ENCODE measurements at regions of chr19 and their contacts with region 1.

Region 1: DNA sequence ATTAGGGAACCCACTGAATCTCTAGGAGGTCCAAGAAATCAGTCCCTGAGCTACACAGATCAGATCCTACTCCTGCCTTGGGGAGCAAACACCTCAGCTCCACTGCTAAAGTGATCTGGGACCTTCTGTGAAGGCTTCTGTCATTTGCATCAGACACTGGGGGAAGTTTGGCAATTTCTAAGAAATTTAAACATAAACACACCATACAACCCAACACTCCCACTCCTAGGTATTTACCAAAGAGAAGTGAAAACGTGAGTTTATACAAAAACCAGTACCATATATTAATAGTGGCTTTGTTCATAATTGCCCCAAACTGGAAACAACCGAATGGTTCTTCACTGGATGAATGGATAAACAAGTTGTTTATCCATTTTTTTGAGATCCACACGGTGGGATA is 7.3 kb upstream of the TYROBP start:
- DNase-seq: no peak
- H3K4me3 ChIP-seq: no peak overlapping the region
- H3K27ac ChIP-seq: no peak overlapping the region
- H3K4me1 ChIP-seq: peaks cover 0 to 19% (median 3%) of the 10 kb centered on the region in 4 donors
- H3K27me3 ChIP-seq: no peaks in the 10 kb centered on the region
- CTCF ChIP-seq: no peak
- EP300 ChIP-seq: no peak
- POLR2A ChIP-seq: no peak

Region 2: DNA sequence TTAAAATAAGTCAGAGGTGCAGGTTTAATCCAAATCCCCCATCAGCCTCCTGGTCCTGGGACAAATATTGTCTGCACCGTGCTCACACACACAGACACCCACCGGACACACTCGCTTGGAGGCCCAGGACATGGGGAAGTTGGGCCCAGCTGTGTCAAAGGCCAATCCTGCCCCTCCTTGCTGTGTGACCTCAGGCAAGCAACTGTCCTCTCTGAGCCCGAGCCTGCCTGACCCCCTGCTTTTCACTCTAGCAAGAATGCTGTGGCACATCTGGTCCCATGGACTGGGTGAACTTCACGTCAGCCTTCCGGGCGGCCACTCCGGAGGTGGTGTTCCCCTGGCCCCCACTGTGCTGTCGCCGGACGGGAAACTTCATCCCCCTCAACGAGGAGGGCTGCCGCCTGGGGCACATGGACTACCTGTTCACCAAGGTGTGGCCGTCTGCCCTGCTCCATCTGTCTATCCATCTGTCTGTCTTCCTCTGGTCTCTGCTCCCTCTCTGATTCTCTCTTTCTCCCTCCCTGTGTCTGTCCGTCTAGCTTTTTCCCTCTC is 239.8 kb before region 1 on chr19:
- intact Hi-C with region 1: loop called (anchors 5 kb)
- DNase-seq: no peak
- H3K4me3 ChIP-seq: no peak overlapping the region
- H3K27ac ChIP-seq: no peak overlapping the region
- H3K4me1 ChIP-seq: peaks cover 0 to 7% (median 6%) of the 10 kb centered on the region in 4 donors
- H3K27me3 ChIP-seq: peaks cover 0 to 58% (median 18%) of the 10 kb centered on the region in 3 donors
- CTCF ChIP-seq: no peak
- EP300 ChIP-seq: no peak
- POLR2A ChIP-seq: no peak

Region 3: DNA sequence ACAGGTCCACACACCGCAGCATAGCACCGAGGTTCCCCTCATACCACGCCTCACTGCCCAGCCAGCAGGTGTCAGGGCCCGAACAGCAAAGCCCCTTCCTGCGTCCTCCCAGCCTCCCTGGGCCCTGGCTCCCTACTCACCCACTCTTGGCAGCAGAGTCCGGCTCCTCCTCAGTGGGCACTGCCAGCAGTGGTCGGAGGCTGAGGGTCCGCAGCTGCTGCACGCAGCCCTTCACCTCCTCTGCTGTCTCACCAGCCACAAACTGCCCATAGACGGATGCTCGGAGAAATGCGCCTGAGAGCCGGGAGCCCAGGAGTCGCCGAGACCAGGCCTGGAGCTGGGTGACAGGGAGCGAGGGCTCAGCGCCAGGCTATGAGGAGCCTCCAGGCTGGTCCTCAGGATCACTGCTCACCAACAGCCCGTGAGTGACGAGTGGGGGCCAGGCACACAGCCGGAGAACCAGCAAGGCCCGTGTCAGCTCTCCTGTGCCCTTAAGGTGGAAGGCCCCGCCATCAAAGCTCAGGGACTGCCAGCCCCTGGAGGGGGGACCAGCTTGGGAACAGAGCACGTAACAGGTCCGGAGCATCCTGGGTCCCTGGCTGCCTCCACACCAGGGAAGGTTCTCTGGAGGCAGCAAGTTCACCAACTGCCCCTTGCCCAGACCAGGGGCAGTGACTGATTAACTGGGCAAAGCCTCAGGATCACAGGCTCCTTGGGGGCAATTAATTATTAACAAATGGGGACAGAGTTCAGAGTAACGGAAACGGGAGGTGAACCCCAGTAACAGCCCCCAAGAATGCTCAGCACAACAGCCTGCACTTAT is 103.0 kb before region 1 on chr19 and contains the start of gene PRODH2:
- intact Hi-C with region 1: no loop called
- DNase-seq: no peak
- H3K4me3 ChIP-seq: no peak within 1 kb of the TSS
- H3K27ac ChIP-seq: no peak within 1 kb of the TSS
- H3K4me1 ChIP-seq: no peaks in the 10 kb centered on the region
- H3K27me3 ChIP-seq: peaks cover 0 to 69% (median 0%) of the 10 kb centered on the region in 3 donors
- CTCF ChIP-seq: no peak
- EP300 ChIP-seq: no peak
- POLR2A ChIP-seq: no peak
- total RNA-seq, gene PRODH2: not detected

Region 4: GRCh38 chr19:35869327-35870123 is 45.9 kb before region 1 on chr19:
- intact Hi-C with region 1: no loop called
- DNase-seq: peak; percentile 88 to 94
- H3K4me3 ChIP-seq: peak overlapping the region; percentile 56 to 63 (median 58)
- H3K27ac ChIP-seq: peak overlapping the region in 4 of 5 donors; percentile 6 to 77 (median 46)
- H3K4me1 ChIP-seq: peaks cover 21 to 27% (median 24%) of the 10 kb centered on the region in 4 donors
- H3K27me3 ChIP-seq: peaks cover 0 to 70% (median 17%) of the 10 kb centered on the region in 3 donors
- CTCF ChIP-seq: no peak
- EP300 ChIP-seq: no peak
- POLR2A ChIP-seq: no peak

Measured in stomach (tissue), 19 donors.